ENCODE measurements at regions of chr1 and their contacts with region 1.

Region 1: GRCh38 chr1:67582625-67583461 is 102.2 kb upstream of the GADD45A start:
- DNase-seq: no peak
- H3K4me3 ChIP-seq: no peak overlapping the region
- H3K27ac ChIP-seq: no peak overlapping the region
- H3K4me1 ChIP-seq: no peaks in the 10 kb centered on the region
- H3K27me3 ChIP-seq: no peaks in the 10 kb centered on the region
- CTCF ChIP-seq: no peak
- POLR2A ChIP-seq: no peak

Region 2: GRCh38 chr1:67559222-67559700 is 23.6 kb before region 1 on chr1:
- CTCF ChIA-PET with region 1: no interaction called
- POLR2A ChIA-PET with region 1: no interaction called
- dilution Hi-C with region 1: no loop called
- intact Hi-C with region 1: no loop called
- DNase-seq: no peak
- H3K4me3 ChIP-seq: no peak overlapping the region
- H3K27ac ChIP-seq: no peak overlapping the region
- H3K4me1 ChIP-seq: peaks cover 13% of the 10 kb centered on the region
- H3K27me3 ChIP-seq: no peaks in the 10 kb centered on the region
- CTCF ChIP-seq: no peak
- POLR2A ChIP-seq: no peak

Region 3: DNA sequence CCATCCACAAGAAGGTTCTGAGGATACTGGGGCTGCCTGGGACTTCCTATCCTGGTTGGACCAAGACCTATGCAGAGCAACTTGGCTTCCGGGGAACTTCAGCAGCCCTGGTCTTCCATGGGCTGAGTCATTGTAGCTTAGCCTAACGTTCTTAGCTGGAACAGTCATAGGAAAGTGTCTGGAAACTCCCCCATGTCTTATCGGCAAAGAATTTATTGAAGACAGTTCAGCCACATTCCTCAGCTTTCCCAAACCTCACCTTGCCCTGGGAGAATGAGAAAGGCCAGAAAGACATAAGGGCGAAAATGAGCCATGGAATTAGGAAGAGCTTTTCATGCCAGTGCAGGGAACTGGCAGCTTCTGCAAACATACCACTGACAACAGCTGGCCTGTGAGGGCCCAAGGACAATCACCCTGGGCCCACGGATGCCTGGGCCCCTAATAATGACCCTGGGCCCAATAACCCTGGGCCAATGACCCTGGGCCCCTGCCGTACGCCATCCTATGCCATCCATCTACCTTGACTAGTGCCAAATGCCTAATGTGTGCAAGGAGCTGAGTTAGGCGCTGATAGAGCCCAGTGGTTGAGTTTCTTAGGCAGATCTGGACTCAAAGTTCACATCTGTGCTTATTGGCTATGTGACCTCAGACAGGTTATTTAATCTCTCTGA is 12.2 kb before region 1 on chr1:
- CTCF ChIA-PET with region 1: interaction called, 27 read pairs
- POLR2A ChIA-PET with region 1: no interaction called
- dilution Hi-C with region 1: no loop called
- intact Hi-C with region 1: no loop called
- DNase-seq: peak; percentile 50
- H3K4me3 ChIP-seq: no peak overlapping the region
- H3K27ac ChIP-seq: no peak overlapping the region
- H3K4me1 ChIP-seq: peaks cover 5% of the 10 kb centered on the region
- H3K27me3 ChIP-seq: no peaks in the 10 kb centered on the region
- CTCF ChIP-seq: no peak
- POLR2A ChIP-seq: no peak

Measured in endothelial cell of umbilical vein (primary cell).